ENCODE measurements at regions of chr2 and their contacts with region 1.

Region 1: DNA sequence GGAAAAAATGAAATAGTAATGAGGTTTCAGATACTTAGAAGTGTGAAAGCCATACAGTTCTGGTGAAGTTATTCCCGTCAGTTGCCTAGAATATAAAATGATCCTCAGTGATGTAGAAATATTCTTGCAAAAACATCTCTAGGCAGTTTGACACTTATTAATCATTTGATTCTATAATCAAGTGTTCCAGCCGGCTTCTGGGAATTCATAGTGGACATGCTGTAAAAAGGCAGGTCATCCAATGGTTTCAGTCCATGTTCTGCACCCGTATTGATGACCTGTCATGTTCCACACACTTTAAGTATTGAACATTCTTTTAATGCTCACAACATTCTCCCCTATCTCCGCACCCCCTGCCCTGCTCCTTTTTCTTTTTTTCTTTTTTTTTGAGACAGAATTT is 19.8 kb downstream of the ARPC2 start:
- DNase-seq: no peak
- H3K4me3 ChIP-seq: no peak overlapping the region
- H3K27ac ChIP-seq: no peak overlapping the region
- H3K4me1 ChIP-seq: no peaks in the 10 kb centered on the region
- H3K27me3 ChIP-seq: no peaks in the 10 kb centered on the region
- CTCF ChIP-seq: no peak
- POLR2A ChIP-seq: no peak

Region 2: DNA sequence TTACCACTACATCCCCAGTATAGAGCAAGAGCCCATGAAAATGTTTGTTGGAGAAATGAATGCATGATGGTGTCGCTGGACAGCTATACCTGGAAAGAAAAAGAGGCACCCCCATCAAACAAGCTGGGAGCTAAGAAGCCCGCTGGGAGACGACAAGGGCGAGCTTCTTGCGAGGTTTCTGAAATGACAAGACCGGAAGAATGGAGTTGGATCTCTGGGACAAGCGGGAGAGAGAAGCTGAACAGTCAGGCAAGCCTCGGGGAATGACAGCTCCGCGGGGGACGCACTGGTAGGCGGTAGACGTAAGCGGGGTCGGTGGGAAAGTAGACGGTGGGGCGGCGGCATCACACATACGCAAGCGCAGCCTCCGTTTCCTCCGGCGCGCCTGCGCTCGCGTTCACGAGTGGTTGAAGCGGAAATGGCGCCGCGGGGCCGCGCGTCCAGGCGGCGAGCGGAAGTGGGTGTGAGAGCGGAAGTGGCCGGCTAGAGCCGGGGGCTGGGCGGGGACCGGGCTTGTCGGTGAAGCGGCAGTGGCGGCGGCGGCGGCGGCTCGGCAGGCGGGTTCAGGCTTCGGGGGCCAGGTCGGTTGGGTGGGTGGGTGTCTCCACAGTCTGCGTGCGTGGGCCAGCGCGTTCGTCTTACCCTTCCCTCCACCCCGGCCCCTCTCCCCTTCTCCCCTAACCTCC is 20.0 kb before region 1 on chr2 and contains the start of gene ARPC2:
- intact Hi-C with region 1: loop called (anchors 1 kb)
- DNase-seq: peak; percentile 91 to 92
- H3K4me3 ChIP-seq: peak within 1 kb of the TSS; percentile 86 to 100 (median 98)
- H3K27ac ChIP-seq: peak within 1 kb of the TSS; percentile 95 to 96
- H3K4me1 ChIP-seq: no peaks in the 10 kb centered on the region
- H3K27me3 ChIP-seq: no peaks in the 10 kb centered on the region
- CTCF ChIP-seq: peak; percentile 24 to 71 (median 46)
- POLR2A ChIP-seq: peak; percentile 93
- total RNA-seq, gene ARPC2: 212 to 336 (median 248) TPM

Measured in breast epithelium (tissue), 4 donors.